ENCODE measurements at regions of chr10 and their contacts with region 1.

Region 1: GRCh38 chr10:79155301-79156081 is 86.7 kb downstream of the ZMIZ1 start:
- DNase-seq: no peak
- H3K4me3 ChIP-seq: no peak overlapping the region
- H3K4me3 Mint-ChIP-seq: no peak overlapping the region
- H3K27ac Mint-ChIP-seq: peak overlapping the region; percentile 96
- H3K4me1 ChIP-seq: peaks cover 56% of the 10 kb centered on the region
- H3K4me1 Mint-ChIP-seq: peaks cover 31% of the 10 kb centered on the region
- H3K27me3 ChIP-seq: no peaks in the 10 kb centered on the region
- H3K27me3 Mint-ChIP-seq: no peaks in the 10 kb centered on the region
- CTCF ChIP-seq: peak in 1 of 2 experiments; percentile 11

Region 2: GRCh38 chr10:79188154-79188960 is 32.9 kb after region 1 on chr10:
- CTCF ChIA-PET with region 1: interaction called, 3 read pairs
- POLR2A ChIA-PET with region 1: interaction called, 3 read pairs
- intact Hi-C with region 1: loop called (anchors 1 kb)
- DNase-seq: peak; percentile 85 to 91
- H3K4me3 ChIP-seq: no peak overlapping the region
- H3K4me3 Mint-ChIP-seq: peak overlapping the region; percentile 46
- H3K27ac Mint-ChIP-seq: peak overlapping the region; percentile 91
- H3K4me1 ChIP-seq: peaks cover 63% of the 10 kb centered on the region
- H3K4me1 Mint-ChIP-seq: peaks cover 57% of the 10 kb centered on the region
- H3K27me3 ChIP-seq: no peaks in the 10 kb centered on the region
- H3K27me3 Mint-ChIP-seq: no peaks in the 10 kb centered on the region
- CTCF ChIP-seq: no peak

Measured in Caco-2 (cell line).